Activated CD8-positive, alpha-beta T cell treated with anti-CD3 and anti-CD28 coated beads for 36 hours (primary cell): ENCODE measurements at regions of chr20 and their contacts with region 1.

Region 1: DNA sequence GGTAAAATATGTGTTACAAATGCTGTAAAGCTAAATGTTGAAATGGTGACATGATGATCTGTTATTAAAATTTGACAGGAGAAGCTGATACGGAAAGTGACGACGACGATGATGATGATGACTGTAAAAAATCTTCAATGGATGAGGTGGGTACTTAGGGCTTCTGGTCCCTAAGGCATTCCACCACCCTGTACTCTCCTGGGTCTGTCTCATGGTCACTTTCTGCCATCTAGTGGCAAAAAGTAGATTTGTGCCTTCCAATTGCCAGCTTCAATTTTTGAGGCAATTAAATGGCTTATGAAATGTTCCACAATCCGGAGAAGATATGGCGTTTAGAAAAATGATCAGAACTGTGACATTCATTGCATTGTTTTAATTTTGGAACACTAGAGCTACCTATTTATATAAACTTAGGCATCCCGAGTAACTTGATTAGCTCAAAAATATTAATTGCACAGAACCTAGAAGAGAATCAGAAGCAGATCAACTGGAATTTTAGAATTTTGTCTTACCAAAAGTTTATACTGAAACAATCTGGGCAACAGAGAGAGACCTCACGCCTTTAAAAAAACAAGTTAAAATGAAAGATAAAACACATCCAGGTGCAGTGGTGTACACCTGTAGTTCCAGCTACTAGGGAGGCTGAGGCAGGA is 346.5 kb upstream of the PLCB4 start:
- DNase-seq: peak; percentile 32
- ATAC-seq: peak; percentile 51
- H3K4me3 Mint-ChIP-seq: no peak overlapping the region
- H3K27ac Mint-ChIP-seq: no peak overlapping the region
- H3K4me1 Mint-ChIP-seq: no peaks in the 10 kb centered on the region
- H3K27me3 Mint-ChIP-seq: no peaks in the 10 kb centered on the region
- CTCF ChIP-seq: peak; percentile 56

Region 2: DNA sequence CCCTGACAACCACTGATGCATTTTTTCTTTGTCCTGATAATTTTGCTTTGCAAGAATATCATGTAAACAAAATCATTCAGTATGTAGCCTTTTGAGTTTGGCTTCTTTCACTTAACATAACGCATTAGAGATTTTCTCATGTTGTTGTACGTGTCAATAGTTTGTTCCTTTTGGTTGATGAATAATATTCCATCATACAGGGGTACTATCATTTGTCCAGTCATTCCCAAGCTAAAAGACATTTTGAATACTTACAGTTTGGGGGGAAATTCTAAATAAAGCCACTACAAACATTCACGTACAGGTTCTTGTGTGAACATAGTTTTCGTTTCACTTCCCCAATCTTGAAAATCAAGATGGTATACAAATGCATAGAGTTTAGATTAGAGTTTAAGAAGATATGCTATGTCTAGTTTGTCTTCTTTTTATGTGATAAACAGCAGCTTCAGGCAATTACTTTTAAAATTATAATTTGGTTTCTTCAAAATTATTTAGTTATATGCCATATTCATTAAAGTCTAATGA is 787.3 kb before region 1 on chr20:
- CTCF ChIA-PET with region 1: interaction called, 50 read pairs
- POLR2A ChIA-PET with region 1: no interaction called
- intact Hi-C with region 1: loop called (anchors 5 kb)
- DNase-seq: no peak
- ATAC-seq: no peak
- H3K4me3 Mint-ChIP-seq: no peak overlapping the region
- H3K27ac Mint-ChIP-seq: no peak overlapping the region
- H3K4me1 Mint-ChIP-seq: no peaks in the 10 kb centered on the region
- H3K27me3 Mint-ChIP-seq: peaks cover 8% of the 10 kb centered on the region
- CTCF ChIP-seq: no peak

Region 3: DNA sequence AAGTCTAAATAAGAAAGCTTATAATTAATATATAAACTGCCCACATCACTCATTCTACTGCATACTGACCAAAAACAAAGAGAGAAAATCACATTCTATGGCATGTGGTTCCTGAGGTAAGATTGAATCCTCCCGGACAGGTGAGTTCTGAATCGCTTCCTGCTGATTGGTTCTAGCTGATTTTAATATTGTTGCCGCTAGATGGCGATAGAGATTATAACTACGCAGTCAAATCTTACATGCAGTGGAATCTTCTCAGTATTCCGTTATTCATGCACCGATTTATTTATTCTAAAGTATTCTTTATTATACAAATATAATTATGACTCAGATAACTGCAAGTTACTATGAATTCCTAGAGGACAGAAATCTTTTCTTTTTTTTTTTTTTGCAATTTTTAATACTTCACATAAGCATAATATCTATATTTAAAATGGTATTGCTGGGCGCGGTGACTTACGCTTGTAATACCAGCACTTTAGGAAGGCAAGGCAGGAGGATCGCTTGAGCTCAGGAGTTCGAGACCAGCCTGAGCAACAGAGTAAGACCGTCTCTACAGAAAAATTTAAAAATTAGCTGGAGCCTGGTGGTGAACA is 678.6 kb before region 1 on chr20:
- CTCF ChIA-PET with region 1: interaction called, 112 read pairs
- POLR2A ChIA-PET with region 1: interaction called, 5 read pairs
- intact Hi-C with region 1: loop called (anchors 5 kb)
- DNase-seq: peak; percentile 14
- ATAC-seq: peak; percentile 71
- H3K4me3 Mint-ChIP-seq: no peak overlapping the region
- H3K27ac Mint-ChIP-seq: no peak overlapping the region
- H3K4me1 Mint-ChIP-seq: peaks cover 1% of the 10 kb centered on the region
- H3K27me3 Mint-ChIP-seq: peaks cover 4% of the 10 kb centered on the region
- CTCF ChIP-seq: peak; percentile 90

Region 4: DNA sequence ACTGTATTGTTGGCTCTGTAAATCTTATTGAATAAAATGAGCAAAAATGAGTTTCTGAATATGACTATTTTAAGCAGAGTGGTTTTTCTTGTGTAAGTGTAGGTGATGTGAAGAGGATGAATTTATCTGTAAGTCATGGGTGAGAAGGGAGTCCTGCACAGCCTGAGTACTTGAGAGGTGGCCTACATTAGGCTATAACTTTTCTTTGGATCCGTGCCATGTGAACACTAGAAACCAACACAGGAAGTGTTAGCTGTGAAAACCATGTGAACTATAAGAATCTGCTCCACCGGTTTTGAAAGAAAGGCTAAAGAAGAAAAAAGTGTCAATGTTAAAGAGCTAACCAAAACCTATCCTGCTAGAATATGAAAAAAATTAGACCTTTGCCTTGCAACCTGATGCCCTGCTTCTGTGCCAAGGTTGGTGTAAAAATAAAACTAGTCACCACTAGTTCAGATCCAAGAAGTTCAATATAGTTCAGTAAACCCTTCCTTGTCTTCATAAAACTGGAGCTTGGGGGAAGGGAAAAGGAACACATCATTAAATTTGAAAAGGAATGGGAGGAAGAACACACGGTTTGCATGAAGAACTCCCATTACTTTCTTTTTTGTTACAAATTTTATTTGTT is 569.0 kb before region 1 on chr20:
- CTCF ChIA-PET with region 1: interaction called, 12 read pairs
- POLR2A ChIA-PET with region 1: no interaction called
- intact Hi-C with region 1: no loop called
- DNase-seq: no peak
- ATAC-seq: peak; percentile 31
- H3K4me3 Mint-ChIP-seq: no peak overlapping the region
- H3K27ac Mint-ChIP-seq: no peak overlapping the region
- H3K4me1 Mint-ChIP-seq: peaks cover 53% of the 10 kb centered on the region
- H3K27me3 Mint-ChIP-seq: no peaks in the 10 kb centered on the region
- CTCF ChIP-seq: no peak

Region 5: GRCh38 chr20:8399947-8400346 is 322.5 kb before region 1 on chr20:
- CTCF ChIA-PET with region 1: interaction called, 16 read pairs
- POLR2A ChIA-PET with region 1: no interaction called
- intact Hi-C with region 1: loop called (anchors 10 kb)
- DNase-seq: no peak
- ATAC-seq: peak; percentile 79
- H3K4me3 Mint-ChIP-seq: no peak overlapping the region
- H3K27ac Mint-ChIP-seq: no peak overlapping the region
- H3K4me1 Mint-ChIP-seq: peaks cover 10% of the 10 kb centered on the region
- H3K27me3 Mint-ChIP-seq: no peaks in the 10 kb centered on the region
- CTCF ChIP-seq: no peak

Region 6: DNA sequence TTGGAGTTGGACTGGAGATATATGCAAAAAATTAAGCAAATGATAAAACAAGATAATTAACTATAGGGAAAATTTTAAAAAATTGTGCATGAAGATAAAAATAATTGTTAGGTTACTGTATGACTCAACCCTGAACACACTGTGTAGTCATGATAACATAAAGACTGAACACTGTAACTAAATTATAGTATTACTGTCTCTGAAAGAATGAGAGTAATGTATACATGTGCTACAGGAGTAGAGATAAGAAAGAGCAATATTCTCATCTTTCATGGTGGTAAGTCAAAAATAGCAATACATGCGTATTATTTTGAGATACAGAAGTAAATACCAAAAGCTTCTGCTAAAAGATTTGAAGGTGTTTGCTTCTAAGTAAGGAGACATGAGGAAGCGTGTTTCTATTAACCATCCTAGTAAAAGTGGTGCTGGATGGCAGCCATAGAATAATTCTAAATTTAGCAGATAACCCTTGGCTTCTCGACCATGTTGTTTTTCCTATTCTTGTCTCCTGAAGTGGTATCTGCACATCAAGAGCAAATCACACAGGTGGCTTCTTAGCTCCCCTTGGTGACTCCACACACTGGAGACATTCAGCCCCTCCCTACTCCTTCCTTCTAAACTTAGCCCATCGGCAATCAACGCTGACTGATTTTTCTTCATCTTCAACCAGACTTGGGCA is 44.2 kb before region 1 on chr20:
- CTCF ChIA-PET with region 1: interaction called, 14 read pairs
- POLR2A ChIA-PET with region 1: no interaction called
- intact Hi-C with region 1: no loop called
- DNase-seq: no peak
- ATAC-seq: no peak
- H3K4me3 Mint-ChIP-seq: no peak overlapping the region
- H3K27ac Mint-ChIP-seq: no peak overlapping the region
- H3K4me1 Mint-ChIP-seq: no peaks in the 10 kb centered on the region
- H3K27me3 Mint-ChIP-seq: no peaks in the 10 kb centered on the region
- CTCF ChIP-seq: no peak

Region 7: DNA sequence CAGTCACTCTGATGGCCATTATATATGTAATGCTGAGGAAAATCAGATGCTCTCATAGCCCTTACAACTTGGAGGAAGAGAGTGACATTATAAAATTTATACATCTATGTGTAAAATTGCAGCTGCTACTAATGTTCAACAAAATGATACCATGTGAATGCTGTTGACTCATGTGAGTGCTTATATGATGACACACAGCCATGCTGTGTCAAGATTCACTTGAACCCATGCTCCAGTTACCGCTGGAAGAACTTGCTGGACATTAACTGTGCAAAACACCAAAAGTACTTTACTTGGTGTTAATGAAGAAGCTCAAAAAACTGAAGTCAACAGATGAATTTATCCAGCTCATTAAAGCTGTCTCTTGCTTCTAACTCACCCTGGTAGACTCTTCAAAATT is 27.6 kb after region 1 on chr20:
- CTCF ChIA-PET with region 1: interaction called, 13 read pairs
- POLR2A ChIA-PET with region 1: no interaction called
- intact Hi-C with region 1: no loop called
- DNase-seq: no peak
- ATAC-seq: no peak
- H3K4me3 Mint-ChIP-seq: no peak overlapping the region
- H3K27ac Mint-ChIP-seq: no peak overlapping the region
- H3K4me1 Mint-ChIP-seq: peaks cover 2% of the 10 kb centered on the region
- H3K27me3 Mint-ChIP-seq: no peaks in the 10 kb centered on the region
- CTCF ChIP-seq: no peak